CD8-positive, alpha-beta memory T cell (primary cell): ENCODE measurements at regions of chr14 and their contacts with region 1.

Region 1: DNA sequence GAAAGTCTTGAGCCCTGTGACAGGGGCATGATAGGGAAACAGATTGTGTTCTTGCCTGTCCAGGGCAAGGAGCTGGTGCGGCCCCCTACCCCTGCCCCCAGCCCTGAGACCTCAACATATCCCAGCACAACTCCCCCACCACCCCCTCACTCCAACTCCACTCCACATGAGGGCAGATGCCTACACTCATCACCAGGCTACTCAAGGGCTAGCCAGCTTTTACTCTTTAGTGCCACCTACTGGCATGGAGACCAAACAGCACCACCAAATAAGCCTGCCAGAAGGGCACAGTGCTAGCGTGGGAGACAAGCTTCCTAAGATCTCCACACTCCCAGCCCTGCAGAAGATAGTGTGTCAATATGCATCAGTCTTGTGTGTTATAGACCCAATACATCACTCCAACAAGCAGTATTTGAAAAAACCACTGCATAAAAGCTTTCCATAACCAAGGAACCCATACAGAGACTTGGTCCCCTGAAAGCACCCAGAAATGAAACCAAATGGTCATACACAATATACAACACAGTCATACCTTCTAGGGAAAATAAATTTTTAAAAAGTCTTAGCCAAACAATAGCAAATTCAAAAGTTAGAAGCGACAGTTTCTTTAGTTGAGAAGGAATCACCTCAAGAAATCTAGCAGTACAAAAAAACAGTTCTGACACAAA is 154.4 kb downstream of the KCNK10 start:
- DNase-seq: peak; percentile 29 to 72 (median 46)
- H3K4me3 ChIP-seq: no peak overlapping the region
- H3K4me3 Mint-ChIP-seq: peak overlapping the region in 5 of 7 donors; percentile 41 to 74 (median 65)
- H3K27ac ChIP-seq: no peak overlapping the region
- H3K27ac Mint-ChIP-seq: peak overlapping the region in 3 of 8 donors; percentile 23 to 43 (median 37)
- H3K4me1 ChIP-seq: no peaks in the 10 kb centered on the region
- H3K4me1 Mint-ChIP-seq: peaks cover 20 to 25% (median 22%) of the 10 kb centered on the region in 3 donors
- H3K27me3 ChIP-seq: no peaks in the 10 kb centered on the region
- H3K27me3 Mint-ChIP-seq: peaks cover 8 to 27% of the 10 kb centered on the region in 2 donors

Region 2: DNA sequence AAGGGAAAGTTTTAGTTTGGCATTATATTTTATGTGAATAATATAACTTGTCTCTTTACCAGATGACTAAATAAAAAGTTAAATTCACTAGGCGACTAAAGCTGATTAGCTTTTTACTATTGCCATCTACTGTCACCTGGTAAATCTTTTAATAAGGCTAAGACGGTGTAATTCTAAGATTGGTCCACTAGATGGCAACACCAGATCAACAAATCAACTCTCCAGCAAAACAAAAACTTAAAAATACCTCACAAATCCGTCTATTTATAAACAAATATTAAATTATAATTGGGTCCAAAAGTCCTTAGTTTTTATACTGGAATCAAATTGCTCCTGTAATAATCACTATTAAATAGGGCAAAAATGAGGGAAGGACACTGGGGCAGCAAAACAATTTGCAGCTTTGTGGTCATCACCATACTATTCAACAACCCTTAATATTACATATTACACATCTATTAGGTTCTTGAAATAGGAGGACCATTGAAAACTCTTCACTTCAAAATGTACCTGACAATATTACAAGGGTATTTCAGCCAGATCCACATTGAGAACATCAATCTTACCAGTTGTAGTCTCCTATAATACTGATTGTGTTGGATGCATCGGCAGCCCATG is 223.5 kb before region 1 on chr14:
- CTCF ChIA-PET with region 1: interaction called, 64 read pairs
- POLR2A ChIA-PET with region 1: no interaction called
- DNase-seq: peak in 2 of 5 donors; percentile 39 to 44
- H3K4me3 ChIP-seq: no peak overlapping the region
- H3K4me3 Mint-ChIP-seq: no peak overlapping the region
- H3K27ac ChIP-seq: no peak overlapping the region
- H3K27ac Mint-ChIP-seq: peak overlapping the region in 3 of 8 donors; percentile 8 to 82 (median 66)
- H3K4me1 ChIP-seq: peaks cover 7% of the 10 kb centered on the region
- H3K4me1 Mint-ChIP-seq: peaks cover 15 to 33% (median 26%) of the 10 kb centered on the region in 3 donors
- H3K27me3 ChIP-seq: no peaks in the 10 kb centered on the region
- H3K27me3 Mint-ChIP-seq: no peaks in the 10 kb centered on the region

Region 3: DNA sequence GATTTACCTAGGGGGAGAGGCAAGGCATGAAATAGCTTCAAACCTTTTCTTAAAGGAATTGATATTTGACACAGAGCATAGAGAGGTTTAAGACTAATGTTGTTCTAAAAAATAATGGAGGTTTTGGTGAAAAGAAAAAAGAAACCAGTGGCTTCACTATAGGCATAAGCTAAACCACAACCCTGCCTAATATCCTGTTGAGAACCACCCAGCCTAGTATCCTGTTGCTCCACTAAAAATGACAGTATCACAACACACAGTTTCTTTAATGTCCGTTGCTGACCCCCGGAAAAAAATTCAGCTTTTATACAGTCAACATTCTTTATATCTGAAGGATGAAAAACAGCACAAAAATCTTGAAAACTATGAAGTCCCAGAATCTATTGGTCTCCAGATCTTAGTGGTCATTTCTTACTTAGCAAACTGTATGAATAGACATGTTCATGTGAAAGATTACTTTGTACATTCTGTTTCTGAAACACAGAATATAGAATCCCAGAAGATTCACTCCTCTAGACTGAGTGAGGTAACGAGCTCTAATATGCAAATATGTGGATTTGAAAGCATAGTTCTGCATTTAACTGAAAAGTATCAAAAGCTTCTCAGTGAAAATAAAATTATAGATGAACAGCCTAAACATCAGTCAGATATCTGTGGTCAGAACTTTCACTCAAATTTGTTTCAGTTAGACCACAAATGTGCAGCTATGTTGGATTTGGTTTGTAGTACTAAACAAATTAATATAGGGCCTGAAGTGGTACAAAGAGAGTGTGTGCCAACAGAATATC is 216.1 kb before region 1 on chr14:
- CTCF ChIA-PET with region 1: interaction called, 64 read pairs
- POLR2A ChIA-PET with region 1: no interaction called
- DNase-seq: peak in 1 of 5 donors; percentile 41
- H3K4me3 ChIP-seq: peak overlapping the region; percentile 18
- H3K4me3 Mint-ChIP-seq: peak overlapping the region; percentile 21 to 85 (median 78)
- H3K27ac ChIP-seq: peak overlapping the region; percentile 25
- H3K27ac Mint-ChIP-seq: peak overlapping the region; percentile 67 to 99 (median 96)
- H3K4me1 ChIP-seq: peaks cover 27% of the 10 kb centered on the region
- H3K4me1 Mint-ChIP-seq: peaks cover 66 to 83% (median 69%) of the 10 kb centered on the region in 3 donors
- H3K27me3 ChIP-seq: no peaks in the 10 kb centered on the region
- H3K27me3 Mint-ChIP-seq: no peaks in the 10 kb centered on the region

Region 4: DNA sequence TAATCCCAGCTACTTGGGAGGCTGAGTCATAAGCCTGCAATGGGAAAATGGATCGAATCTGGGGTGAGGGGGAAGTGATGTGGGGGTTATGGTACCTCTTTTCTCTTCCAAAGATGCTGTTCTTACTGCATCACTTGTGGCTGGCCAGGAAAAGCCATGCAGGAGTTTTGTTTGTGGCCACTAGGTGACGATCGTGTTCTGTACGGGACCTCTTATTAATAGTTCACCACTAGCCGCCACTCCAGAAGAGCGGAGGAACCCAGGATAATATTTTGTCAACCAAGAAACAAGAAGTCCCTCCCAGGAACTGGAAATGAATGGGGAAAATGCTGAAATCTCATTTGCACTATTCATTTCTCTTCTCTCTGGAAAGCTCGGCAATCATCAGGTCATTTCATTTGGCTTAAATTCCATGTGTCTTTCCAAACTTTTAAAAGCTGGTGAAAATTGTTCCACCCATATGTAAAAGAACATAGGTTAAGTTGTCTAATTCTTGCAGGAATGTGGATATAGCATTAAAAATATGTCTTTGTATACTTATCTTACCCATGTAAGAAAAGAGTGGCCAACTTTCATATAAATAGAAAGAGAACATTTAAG is 154.8 kb before region 1 on chr14:
- CTCF ChIA-PET with region 1: interaction called, 22 read pairs
- POLR2A ChIA-PET with region 1: no interaction called
- DNase-seq: peak in 4 of 5 donors; percentile 20 to 60 (median 33)
- H3K4me3 ChIP-seq: no peak overlapping the region
- H3K4me3 Mint-ChIP-seq: peak overlapping the region; percentile 24 to 74 (median 61)
- H3K27ac ChIP-seq: no peak overlapping the region
- H3K27ac Mint-ChIP-seq: peak overlapping the region; percentile 64 to 99 (median 92)
- H3K4me1 ChIP-seq: peaks cover 52% of the 10 kb centered on the region
- H3K4me1 Mint-ChIP-seq: peaks cover 86 to 92% (median 91%) of the 10 kb centered on the region in 3 donors
- H3K27me3 ChIP-seq: no peaks in the 10 kb centered on the region
- H3K27me3 Mint-ChIP-seq: no peaks in the 10 kb centered on the region

Region 5: DNA sequence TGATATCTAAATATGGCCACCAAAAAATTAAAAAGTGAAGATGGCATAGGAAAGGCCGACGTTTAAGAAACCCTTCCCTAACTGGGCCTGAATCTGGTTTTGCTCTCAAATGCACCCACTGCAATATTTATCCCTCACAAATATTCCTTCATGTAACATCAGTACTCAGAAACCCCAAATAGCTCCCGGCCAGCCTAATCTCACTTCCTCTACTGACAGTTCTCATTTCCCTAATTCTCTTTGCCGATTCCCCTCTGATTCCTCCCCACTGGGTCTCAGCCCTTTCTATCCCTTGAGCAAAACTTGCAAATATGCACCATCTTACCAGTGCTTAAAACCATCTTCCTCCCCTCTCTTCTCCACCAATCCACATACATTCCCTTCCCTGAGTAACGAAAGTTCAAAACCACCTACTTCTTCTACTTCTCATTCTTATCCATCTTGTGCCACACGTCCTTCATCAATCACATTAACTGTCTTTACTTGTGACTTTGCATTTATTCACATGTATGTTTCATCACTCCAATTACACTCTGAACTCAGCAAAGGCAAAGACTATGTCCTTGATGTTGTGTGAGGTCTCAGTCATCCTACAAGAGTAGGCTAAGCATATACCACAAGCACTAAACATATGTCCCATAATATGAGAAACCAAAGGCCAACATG is 131.4 kb after region 1 on chr14:
- CTCF ChIA-PET with region 1: no interaction called
- POLR2A ChIA-PET with region 1: no interaction called
- DNase-seq: no peak
- H3K4me3 ChIP-seq: no peak overlapping the region
- H3K4me3 Mint-ChIP-seq: no peak overlapping the region
- H3K27ac ChIP-seq: no peak overlapping the region
- H3K27ac Mint-ChIP-seq: no peak overlapping the region
- H3K4me1 ChIP-seq: no peaks in the 10 kb centered on the region
- H3K4me1 Mint-ChIP-seq: peaks cover 0 to 5% (median 3%) of the 10 kb centered on the region in 3 donors
- H3K27me3 ChIP-seq: no peaks in the 10 kb centered on the region
- H3K27me3 Mint-ChIP-seq: peaks cover 26 to 36% of the 10 kb centered on the region in 2 donors